ENCODE measurements at regions of chr11 and their contacts with region 1.

Region 1: GRCh38 chr11:5620646-5621521 is 3.9 kb upstream of the TRIM34 start:
- DNase-seq: peak; percentile 87
- ATAC-seq: peak; percentile 85
- H3K4me3 ChIP-seq: peak overlapping the region; percentile 60
- H3K27ac ChIP-seq: peak overlapping the region; percentile 99
- H3K4me1 ChIP-seq: peaks cover 56% of the 10 kb centered on the region
- H3K27me3 ChIP-seq: no peaks in the 10 kb centered on the region
- CTCF ChIP-seq: no peak

Region 2: DNA sequence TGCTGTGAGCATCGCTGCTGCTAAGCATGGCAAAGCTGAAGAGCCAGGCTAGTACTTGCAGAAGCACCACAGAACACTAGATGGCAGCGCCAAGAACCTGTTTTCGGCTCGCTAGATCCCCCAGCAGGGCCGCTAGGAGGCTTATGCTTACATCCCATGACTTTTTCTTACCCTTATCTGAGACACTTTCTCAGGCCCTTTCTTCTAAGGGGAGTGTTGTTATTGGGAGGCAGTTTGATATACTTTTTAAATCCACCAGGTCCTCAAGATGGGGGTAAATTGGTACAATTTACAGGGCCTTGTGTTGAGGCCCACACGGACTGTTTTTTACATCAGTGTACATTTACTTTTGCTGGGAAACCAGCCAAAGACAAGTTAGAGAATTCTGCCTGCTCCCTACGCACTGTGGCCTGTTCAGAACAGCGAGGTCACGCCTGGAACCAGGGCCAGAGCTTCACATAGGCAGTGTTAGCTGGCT is 20.5 kb before region 1 on chr11:
- CTCF ChIA-PET with region 1: interaction called, 3 read pairs
- POLR2A ChIA-PET with region 1: interaction called, 4 read pairs
- intact Hi-C with region 1: loop called (anchors 1 kb)
- DNase-seq: peak; percentile 72
- ATAC-seq: peak; percentile 65
- H3K4me3 ChIP-seq: no peak overlapping the region
- H3K27ac ChIP-seq: no peak overlapping the region
- H3K4me1 ChIP-seq: peaks cover 20% of the 10 kb centered on the region
- H3K27me3 ChIP-seq: no peaks in the 10 kb centered on the region
- CTCF ChIP-seq: peak; percentile 79

Region 3: GRCh38 chr11:5639953-5640352 is 19.1 kb after region 1 on chr11:
- CTCF ChIA-PET with region 1: no interaction called
- POLR2A ChIA-PET with region 1: no interaction called
- intact Hi-C with region 1: loop called (anchors 1 kb)
- DNase-seq: peak; percentile 70
- ATAC-seq: peak; percentile 98
- H3K4me3 ChIP-seq: no peak overlapping the region
- H3K27ac ChIP-seq: peak overlapping the region; percentile 25; the same call in 1 of the 2 replicates
- H3K4me1 ChIP-seq: no peaks in the 10 kb centered on the region
- H3K27me3 ChIP-seq: no peaks in the 10 kb centered on the region
- CTCF ChIP-seq: no peak